Activated CD4-positive, alpha-beta T cell treated with anti-CD3 and anti-CD28 coated beads for 36 hours (primary cell): ENCODE measurements at regions of chr19 and their contacts with region 1.

Region 1: DNA sequence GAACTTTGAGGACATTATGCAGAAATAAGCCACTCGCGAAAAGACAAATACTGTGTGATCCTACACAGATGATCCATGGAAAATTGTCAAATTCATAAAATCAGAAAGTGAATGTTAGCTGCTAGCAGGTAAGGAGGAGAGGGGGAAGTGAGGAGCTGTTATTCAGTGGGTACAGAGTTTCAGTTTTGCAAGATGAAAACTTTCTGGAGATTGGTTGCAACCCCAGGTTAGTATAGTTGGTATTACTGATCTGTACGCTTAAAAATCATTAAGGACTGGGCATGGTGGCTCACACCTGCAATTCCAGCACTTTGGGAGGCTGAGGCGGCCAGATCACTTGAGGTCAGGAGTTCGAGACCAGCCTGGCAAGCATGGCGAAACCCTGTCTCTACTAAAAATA is 17.9 kb downstream of the ZNF101 start:
- DNase-seq: no peak
- ATAC-seq: peak; percentile 43
- H3K4me3 Mint-ChIP-seq: no peak overlapping the region
- H3K27ac Mint-ChIP-seq: no peak overlapping the region
- H3K4me1 Mint-ChIP-seq: no peaks in the 10 kb centered on the region
- H3K27me3 Mint-ChIP-seq: no peaks in the 10 kb centered on the region

Region 2: DNA sequence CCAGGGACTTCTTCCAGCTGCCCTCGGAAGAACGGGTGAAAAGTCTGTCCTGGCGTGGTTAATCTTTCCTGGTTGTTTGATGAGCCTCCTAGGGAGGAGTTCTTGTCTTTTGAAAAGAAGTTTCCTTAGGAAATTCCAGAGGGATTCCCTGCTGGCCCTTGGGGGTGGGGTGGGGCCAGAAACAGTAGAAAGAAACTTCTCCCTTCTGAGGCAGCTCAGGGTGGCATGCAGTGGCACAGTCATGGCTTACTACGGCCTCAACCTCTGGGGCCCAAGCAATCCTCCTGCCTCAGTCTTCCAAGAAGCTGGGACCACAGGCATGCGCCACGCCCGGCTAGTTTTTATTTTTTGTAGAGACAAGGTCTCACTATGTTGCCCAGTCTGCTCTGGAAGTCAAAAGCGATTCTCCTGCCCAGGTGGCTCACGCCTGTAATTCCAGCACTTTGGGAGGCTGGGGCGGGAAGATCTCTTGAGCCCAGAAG is 16.5 kb before region 1 on chr19:
- CTCF ChIA-PET with region 1: no interaction called
- POLR2A ChIA-PET with region 1: no interaction called
- intact Hi-C with region 1: loop called in 1 of 2 experiments (anchors 2 kb)
- DNase-seq: no peak
- ATAC-seq: no peak
- H3K4me3 Mint-ChIP-seq: peak overlapping the region; percentile 87
- H3K27ac Mint-ChIP-seq: peak overlapping the region; percentile 87
- H3K4me1 Mint-ChIP-seq: peaks cover 34% of the 10 kb centered on the region
- H3K27me3 Mint-ChIP-seq: no peaks in the 10 kb centered on the region